PC-3 (cell line): ENCODE measurements at regions of chr6 and their contacts with region 1.

Region 1: DNA sequence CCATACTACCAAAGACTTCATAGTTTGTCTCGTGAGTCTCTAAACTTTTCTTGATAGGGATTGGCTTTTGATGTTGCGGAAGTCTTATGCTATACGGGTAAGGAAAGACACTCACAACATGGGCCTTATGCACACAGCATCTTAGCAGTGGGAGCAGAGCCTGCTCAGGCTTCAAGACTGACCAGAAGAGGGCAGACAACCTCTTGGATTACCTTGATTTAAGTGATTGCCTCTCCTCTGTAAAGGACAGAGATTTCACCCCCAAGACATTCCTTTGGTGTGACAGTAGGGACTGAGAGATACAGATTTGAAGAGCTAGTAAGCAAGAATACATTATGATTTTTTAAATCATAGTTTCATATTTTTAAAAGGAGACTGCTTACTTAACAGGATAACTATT is 71.0 kb upstream of the SAMD3 start:
- DNase-seq: peak; percentile 70
- ATAC-seq: peak; percentile 93
- H3K4me3 ChIP-seq: no peak overlapping the region
- H3K27ac ChIP-seq: no peak overlapping the region
- H3K4me1 ChIP-seq: no peaks in the 10 kb centered on the region
- H3K27me3 ChIP-seq: no peaks in the 10 kb centered on the region
- CTCF ChIP-seq: peak; percentile 73

Region 2: GRCh38 chr6:130697995-130698535 is 404.3 kb after region 1 on chr6:
- CTCF ChIA-PET with region 1: interaction called, 6 read pairs
- POLR2A ChIA-PET with region 1: no interaction called
- intact Hi-C with region 1: loop called (anchors 1 kb)
- DNase-seq: peak; percentile 62
- ATAC-seq: peak; percentile 81
- H3K4me3 ChIP-seq: no peak overlapping the region
- H3K27ac ChIP-seq: no peak overlapping the region
- H3K4me1 ChIP-seq: peaks cover 4% of the 10 kb centered on the region; the same call in 1 of the 2 replicates
- H3K27me3 ChIP-seq: no peaks in the 10 kb centered on the region
- CTCF ChIP-seq: peak; percentile 89

Region 3: GRCh38 chr6:130760006-130760405 is 466.2 kb after region 1 on chr6:
- CTCF ChIA-PET with region 1: no interaction called
- POLR2A ChIA-PET with region 1: no interaction called
- intact Hi-C with region 1: loop called (anchors 2 kb)
- DNase-seq: peak; percentile 66
- ATAC-seq: peak; percentile 85
- H3K4me3 ChIP-seq: no peak overlapping the region
- H3K27ac ChIP-seq: no peak overlapping the region
- H3K4me1 ChIP-seq: no peaks in the 10 kb centered on the region
- H3K27me3 ChIP-seq: no peaks in the 10 kb centered on the region
- CTCF ChIP-seq: peak; percentile 80

Region 4: DNA sequence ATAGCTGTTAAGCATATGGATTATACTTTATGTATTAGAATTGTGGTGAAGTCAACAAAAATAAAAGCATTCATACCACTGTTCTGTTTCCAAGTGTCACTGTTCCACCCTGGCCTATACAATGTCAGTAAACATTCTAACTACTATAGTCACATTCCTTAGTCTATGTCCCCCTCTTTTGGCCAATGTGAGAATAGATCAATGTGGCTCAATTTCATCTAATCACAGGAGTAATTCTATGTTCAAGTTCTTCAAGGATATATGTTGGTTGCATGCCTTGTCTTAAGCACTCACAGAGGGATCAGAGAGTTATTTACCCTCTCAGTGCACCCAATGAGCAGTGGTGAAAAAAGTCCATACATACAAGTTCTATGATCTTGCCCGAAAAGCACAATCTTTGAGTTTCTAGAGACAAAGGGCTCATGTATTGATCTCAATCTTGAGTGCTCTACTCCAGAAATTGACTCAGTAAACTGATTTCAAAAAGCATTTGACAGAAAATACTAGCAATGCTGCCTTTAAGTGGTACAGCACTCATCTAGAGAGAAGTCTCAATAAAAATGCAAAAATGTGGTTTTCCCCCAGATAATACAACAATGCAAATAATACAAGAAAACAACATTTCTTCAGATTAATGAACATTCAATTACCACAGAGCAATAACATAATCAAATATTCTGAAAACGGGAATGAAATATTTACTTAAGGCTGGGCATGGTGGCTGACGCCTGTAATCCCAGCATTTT is 549.9 kb after region 1 on chr6:
- CTCF ChIA-PET with region 1: no interaction called
- POLR2A ChIA-PET with region 1: no interaction called
- intact Hi-C with region 1: loop called (anchors 10 kb)
- DNase-seq: peak; percentile 53
- ATAC-seq: peak; percentile 56
- H3K4me3 ChIP-seq: no peak overlapping the region
- H3K27ac ChIP-seq: no peak overlapping the region
- H3K4me1 ChIP-seq: no peaks in the 10 kb centered on the region
- H3K27me3 ChIP-seq: no peaks in the 10 kb centered on the region
- CTCF ChIP-seq: peak; percentile 61